BJ (cell line): ENCODE measurements at regions of chr11 and their contacts with region 1.

Region 1: DNA sequence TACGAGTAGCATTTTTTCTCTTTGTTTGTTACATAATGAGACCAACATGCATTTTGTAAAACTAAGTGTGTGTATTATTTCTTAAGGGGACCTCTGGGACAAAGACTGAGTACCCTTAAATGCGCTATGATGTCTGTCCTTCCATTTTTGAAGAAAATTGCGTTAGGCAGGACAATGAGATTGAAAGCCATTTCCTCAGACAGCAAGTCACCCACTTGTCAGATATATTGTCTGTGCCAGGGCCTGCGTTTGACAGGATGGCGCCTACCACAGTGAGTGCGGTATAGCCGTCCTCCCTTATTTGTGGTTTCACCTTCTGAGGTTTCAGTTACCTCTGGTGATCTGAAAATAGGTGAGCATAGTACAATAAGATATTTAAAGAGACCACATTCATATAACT is 2.2 kb downstream of the AP2A2 start:
- DNase-seq: no peak
- H3K4me3 ChIP-seq: no peak overlapping the region
- H3K27me3 ChIP-seq: no peaks in the 10 kb centered on the region
- CTCF ChIP-seq: no peak

Region 2: DNA sequence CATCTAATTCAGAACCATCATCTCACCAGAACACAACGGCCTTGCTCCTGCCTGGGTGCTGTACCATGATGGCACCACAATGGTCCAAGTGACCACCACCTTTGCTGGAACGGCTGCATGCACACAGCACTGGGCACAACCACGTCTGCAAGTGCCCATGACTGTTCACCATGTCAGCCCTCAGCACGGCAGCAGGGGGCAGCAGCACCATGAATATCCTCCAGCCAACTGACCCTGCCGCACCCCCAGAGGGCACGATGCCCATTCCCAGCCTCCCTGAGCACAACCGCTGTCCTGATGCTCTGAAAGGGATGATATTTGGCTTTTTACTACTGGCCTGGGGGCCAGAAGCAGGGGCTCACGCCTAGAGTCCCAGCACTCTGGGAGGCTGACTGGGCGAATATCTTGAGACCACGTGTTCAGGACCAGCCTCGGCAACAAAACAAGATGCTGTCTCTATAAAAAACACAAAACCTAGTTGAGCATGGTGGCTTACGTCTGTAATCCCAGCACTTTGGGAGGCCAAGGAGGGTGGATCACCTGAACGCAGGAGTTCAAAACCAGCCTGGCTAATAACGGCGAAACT is 265.1 kb before region 1 on chr11:
- CTCF ChIA-PET with region 1: no interaction called
- POLR2A ChIA-PET with region 1: no interaction called
- DNase-seq: no peak
- H3K4me3 ChIP-seq: no peak overlapping the region
- H3K27me3 ChIP-seq: no peaks in the 10 kb centered on the region
- CTCF ChIP-seq: peak; percentile 76

Region 3: DNA sequence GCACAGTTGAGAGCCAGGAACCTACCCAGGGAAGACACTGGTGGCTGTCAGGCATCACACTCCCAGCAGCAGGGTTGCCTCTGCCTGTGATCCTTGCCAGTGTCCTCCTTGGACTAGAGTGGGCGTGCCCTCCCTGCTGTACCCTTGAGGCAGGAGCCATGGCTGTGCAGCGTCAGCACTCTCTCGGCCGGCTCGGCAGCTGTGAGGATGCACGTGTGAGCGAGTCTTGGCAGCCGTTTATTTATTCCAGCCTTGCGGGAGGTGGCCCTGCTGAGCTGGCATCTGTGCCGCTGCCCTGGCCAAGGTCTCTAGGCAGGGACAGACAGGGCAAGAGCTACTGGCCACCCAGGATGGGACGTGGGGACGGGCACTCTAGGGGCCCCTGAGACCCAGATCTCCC is 51.4 kb before region 1 on chr11:
- CTCF ChIA-PET with region 1: no interaction called
- POLR2A ChIA-PET with region 1: interaction called, 12 read pairs
- DNase-seq: no peak
- H3K4me3 ChIP-seq: no peak overlapping the region
- H3K27me3 ChIP-seq: no peaks in the 10 kb centered on the region
- CTCF ChIP-seq: no peak

Region 4: GRCh38 chr11:942823-943222 is 15.0 kb after region 1 on chr11:
- CTCF ChIA-PET with region 1: no interaction called
- POLR2A ChIA-PET with region 1: no interaction called
- DNase-seq: no peak
- H3K4me3 ChIP-seq: no peak overlapping the region
- H3K27me3 ChIP-seq: no peaks in the 10 kb centered on the region
- CTCF ChIP-seq: no peak